Activated B cell treated with CpG ODN at 0.5 μM for 24 hours (primary cell): ENCODE measurements at regions of chr4 and their contacts with region 1.

Region 1: GRCh38 chr4:10461091-10461849 is 4.0 kb upstream of the ZNF518B start:
- DNase-seq: peak; percentile 79
- ATAC-seq: peak; percentile 85
- H3K4me3 Mint-ChIP-seq: peak overlapping the region; percentile 78
- H3K27ac Mint-ChIP-seq: no peak overlapping the region
- H3K4me1 Mint-ChIP-seq: peaks cover 19% of the 10 kb centered on the region
- H3K27me3 Mint-ChIP-seq: peaks cover 51% of the 10 kb centered on the region
- CTCF ChIP-seq: peak; percentile 83

Region 2: GRCh38 chr4:9691238-9692065 is 769.8 kb before region 1 on chr4:
- CTCF ChIA-PET with region 1: interaction called, 3 read pairs
- POLR2A ChIA-PET with region 1: no interaction called
- intact Hi-C with region 1: loop called (anchors 2 kb)
- DNase-seq: peak; percentile 89
- ATAC-seq: peak; percentile 100
- H3K4me3 Mint-ChIP-seq: peak overlapping the region; percentile 89
- H3K27ac Mint-ChIP-seq: peak overlapping the region; percentile 85
- H3K4me1 Mint-ChIP-seq: peaks cover 12% of the 10 kb centered on the region
- H3K27me3 Mint-ChIP-seq: peaks cover 7% of the 10 kb centered on the region
- CTCF ChIP-seq: no peak

Region 3: DNA sequence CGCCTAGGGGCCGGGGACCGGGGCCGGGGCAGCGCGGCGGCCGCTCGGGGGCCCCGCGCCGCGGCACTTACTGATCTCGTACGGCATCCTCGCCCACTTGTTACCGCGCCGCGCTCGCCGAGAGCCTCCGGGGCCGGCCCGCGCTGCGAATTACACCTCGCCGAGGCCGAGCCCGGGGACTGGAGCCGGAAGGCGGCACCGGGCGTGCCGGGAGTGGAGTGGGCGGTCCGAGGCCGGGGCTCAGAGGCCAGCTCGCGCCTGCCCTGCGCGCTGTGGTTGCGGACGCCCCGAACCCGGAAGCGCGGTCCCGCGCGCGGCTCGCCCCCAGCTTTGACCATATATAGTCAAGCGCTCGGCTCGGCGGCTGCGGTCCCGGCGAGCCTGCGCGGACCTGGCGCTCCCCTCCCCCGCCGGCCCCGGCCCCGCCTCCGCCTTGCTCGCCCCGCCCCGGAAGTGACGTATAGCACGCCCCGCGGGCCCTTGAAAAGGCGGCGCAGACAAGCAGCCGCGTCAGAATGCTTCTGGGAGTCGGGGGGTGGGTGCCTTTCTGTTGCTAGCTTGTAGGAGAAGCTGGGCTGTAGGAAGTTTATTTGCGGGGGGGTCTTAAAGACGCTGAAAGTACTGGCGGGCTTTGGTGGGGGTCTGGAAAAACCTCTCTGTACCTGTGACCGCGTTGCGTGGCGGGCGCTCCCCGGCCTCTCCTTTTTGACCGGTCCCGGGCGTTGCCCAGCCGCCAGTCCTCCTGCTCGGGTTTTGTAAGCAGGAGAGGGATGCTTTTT is 344.5 kb before region 1 on chr4 and contains the start of gene WDR1:
- CTCF ChIA-PET with region 1: interaction called, 3 read pairs
- POLR2A ChIA-PET with region 1: interaction called, 23 read pairs
- intact Hi-C with region 1: no loop called
- DNase-seq: peak; percentile 90
- ATAC-seq: peak; percentile 86
- H3K4me3 Mint-ChIP-seq: peak within 1 kb of the TSS; percentile 91
- H3K27ac Mint-ChIP-seq: peak within 1 kb of the TSS; percentile 98
- H3K4me1 Mint-ChIP-seq: peaks cover 62% of the 10 kb centered on the region
- H3K27me3 Mint-ChIP-seq: no peaks in the 10 kb centered on the region
- CTCF ChIP-seq: no peak
- total RNA-seq, gene WDR1: 337 and 348 TPM in 2 replicates

Region 4: GRCh38 chr4:10413177-10413576 is 48.1 kb before region 1 on chr4:
- CTCF ChIA-PET with region 1: interaction called, 3 read pairs
- POLR2A ChIA-PET with region 1: interaction called, 3 read pairs
- intact Hi-C with region 1: loop called (anchors 1 kb)
- DNase-seq: no peak
- ATAC-seq: peak; percentile 93
- H3K4me3 Mint-ChIP-seq: peak overlapping the region; percentile 36
- H3K27ac Mint-ChIP-seq: peak overlapping the region; percentile 67
- H3K4me1 Mint-ChIP-seq: peaks cover 45% of the 10 kb centered on the region
- H3K27me3 Mint-ChIP-seq: no peaks in the 10 kb centered on the region
- CTCF ChIP-seq: no peak

Region 5: DNA sequence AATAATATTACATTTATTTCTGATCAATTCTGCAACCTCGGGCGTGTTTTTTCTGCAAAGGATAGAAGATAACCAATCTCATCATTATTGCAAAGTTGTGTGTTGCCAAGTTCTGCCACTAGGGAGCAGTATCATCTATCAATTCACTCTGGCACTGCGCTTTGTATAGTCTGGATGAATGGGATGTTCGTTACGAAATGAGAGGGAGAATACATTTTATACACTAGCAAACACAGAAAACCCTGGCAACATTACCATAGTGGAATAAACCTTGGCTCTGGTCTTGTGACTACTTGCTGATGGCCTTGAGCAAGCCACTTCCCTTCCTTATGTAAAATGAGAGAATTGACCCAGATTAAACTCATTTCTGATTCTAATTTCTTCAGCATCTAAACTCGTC is 93.4 kb after region 1 on chr4:
- CTCF ChIA-PET with region 1: interaction called, 11 read pairs
- POLR2A ChIA-PET with region 1: no interaction called
- intact Hi-C with region 1: loop called (anchors 5 kb)
- DNase-seq: no peak
- ATAC-seq: peak; percentile 72
- H3K4me3 Mint-ChIP-seq: no peak overlapping the region
- H3K27ac Mint-ChIP-seq: no peak overlapping the region
- H3K4me1 Mint-ChIP-seq: peaks cover 10% of the 10 kb centered on the region
- H3K27me3 Mint-ChIP-seq: no peaks in the 10 kb centered on the region
- CTCF ChIP-seq: no peak

Region 6: GRCh38 chr4:11471618-11472017 is 1010.3 kb after region 1 on chr4:
- CTCF ChIA-PET with region 1: no interaction called
- POLR2A ChIA-PET with region 1: interaction called, 4 read pairs
- intact Hi-C with region 1: loop called (anchors 5 kb)
- DNase-seq: no peak
- ATAC-seq: peak; percentile 87
- H3K4me3 Mint-ChIP-seq: peak overlapping the region; percentile 81
- H3K27ac Mint-ChIP-seq: peak overlapping the region; percentile 96
- H3K4me1 Mint-ChIP-seq: peaks cover 56% of the 10 kb centered on the region
- H3K27me3 Mint-ChIP-seq: no peaks in the 10 kb centered on the region
- CTCF ChIP-seq: no peak